Activated CD4-positive, alpha-beta T cell treated with anti-CD3 and anti-CD28 coated beads for 36 hours (primary cell): ENCODE measurements at regions of chr2 and their contacts with region 1.

Region 1: DNA sequence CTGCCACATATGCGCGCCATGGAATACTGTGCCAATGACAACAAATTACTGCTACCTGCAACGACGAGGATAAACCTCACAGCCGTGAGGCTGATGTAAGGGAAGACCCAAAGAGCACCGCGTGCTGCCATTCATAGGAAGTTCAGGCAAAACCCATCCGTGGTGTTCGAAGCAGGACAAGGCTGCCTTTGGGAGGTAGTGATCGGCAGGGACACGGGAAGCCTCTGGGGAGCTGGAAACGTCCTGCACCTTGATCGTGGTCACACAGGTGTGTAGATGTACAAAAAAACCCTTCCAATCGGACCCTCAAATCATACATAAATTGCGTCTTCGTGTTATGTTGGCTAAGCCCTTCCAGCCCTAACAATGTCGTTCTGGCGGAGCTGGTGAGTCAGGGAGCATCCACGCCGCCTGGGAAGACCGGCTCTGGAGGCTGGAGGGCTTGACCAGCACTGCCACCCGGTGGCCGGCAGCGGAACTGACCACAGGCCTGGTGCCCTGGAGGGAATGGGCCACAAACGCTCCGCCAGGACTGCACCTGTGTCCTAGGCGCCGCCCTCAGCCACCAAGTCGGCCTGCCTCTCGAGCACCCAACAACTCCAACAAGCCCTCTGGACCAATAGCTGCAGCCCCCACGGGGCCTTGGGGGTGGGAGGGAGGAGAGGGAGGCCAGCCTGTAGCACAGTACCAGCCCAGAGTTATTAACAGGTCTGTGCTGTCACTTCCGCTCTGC is 4.1 kb upstream of the NEURL3 start:
- DNase-seq: peak; percentile 87
- ATAC-seq: peak; percentile 58
- H3K4me3 Mint-ChIP-seq: no peak overlapping the region
- H3K27ac Mint-ChIP-seq: peak overlapping the region; percentile 39
- H3K4me1 Mint-ChIP-seq: peaks cover 18% of the 10 kb centered on the region
- H3K27me3 Mint-ChIP-seq: peaks cover 12% of the 10 kb centered on the region

Region 2: DNA sequence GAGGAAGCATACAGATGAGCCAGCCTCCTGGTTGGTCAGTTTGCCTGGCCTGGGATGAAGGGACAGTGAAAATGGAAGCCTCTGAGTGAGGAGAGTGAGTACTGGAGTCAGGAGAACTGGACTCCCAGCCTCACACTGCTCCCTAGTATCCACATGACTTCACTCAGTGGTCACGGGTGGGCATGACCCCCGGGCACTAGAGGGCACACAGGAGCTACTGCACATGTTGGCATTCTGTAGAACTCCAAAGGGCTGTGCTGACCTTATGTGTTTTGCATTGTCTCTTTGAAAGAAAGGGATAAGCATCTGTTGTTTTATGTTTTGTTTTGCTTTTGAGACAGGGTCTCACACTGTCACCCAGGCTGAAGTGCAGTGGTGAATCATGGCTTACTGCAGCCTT is 150.0 kb before region 1 on chr2:
- CTCF ChIA-PET with region 1: interaction called, 4 read pairs
- POLR2A ChIA-PET with region 1: no interaction called
- intact Hi-C with region 1: loop called in 1 of 2 experiments (anchors 1 kb)
- DNase-seq: peak; percentile 57
- ATAC-seq: peak; percentile 74
- H3K4me3 Mint-ChIP-seq: no peak overlapping the region
- H3K27ac Mint-ChIP-seq: no peak overlapping the region
- H3K4me1 Mint-ChIP-seq: peaks cover 12% of the 10 kb centered on the region
- H3K27me3 Mint-ChIP-seq: no peaks in the 10 kb centered on the region

Region 3: DNA sequence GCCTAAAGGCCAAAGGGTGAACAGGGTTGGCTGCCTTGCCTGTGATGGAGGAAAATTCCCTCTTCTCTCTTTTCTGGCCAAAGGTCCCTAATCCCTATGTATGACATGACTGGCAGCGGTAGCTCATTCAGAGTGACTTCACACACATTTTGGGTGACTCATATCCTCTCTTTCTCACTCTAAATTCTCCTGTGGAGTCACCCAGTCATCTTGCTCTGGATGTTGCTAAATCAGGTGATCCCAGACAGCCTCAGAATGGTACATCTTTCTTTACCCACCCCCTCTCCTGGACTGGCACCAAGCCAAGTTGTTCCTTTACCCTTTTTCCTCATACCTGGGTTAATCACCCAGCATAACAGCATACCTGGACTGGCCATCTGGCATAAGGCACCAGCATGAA is 81.4 kb before region 1 on chr2:
- CTCF ChIA-PET with region 1: interaction called, 5 read pairs
- POLR2A ChIA-PET with region 1: no interaction called
- intact Hi-C with region 1: loop called in 1 of 2 experiments (anchors 5 kb)
- DNase-seq: peak; percentile 58
- ATAC-seq: peak; percentile 100
- H3K4me3 Mint-ChIP-seq: no peak overlapping the region
- H3K27ac Mint-ChIP-seq: peak overlapping the region; percentile 64
- H3K4me1 Mint-ChIP-seq: peaks cover 10% of the 10 kb centered on the region
- H3K27me3 Mint-ChIP-seq: peaks cover 7% of the 10 kb centered on the region

Region 4: DNA sequence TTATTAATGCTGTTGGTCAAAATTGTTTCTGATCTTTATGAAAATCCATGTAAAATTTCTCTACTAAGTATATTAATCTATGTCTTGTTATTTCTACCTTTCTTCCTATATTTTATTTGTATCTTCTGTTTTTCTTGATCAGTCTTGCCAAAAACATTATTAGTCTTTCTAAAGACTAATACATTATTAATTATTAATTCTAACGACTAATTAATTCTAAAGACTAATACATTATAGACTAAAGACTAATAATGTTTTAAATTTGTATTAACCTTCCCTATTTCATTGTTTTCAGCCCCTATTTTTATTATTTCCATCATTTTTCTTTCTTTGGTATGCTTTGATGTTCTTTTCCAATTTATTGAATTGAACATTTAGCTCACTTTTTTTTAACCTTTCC is 31.8 kb before region 1 on chr2:
- CTCF ChIA-PET with region 1: interaction called, 20 read pairs
- POLR2A ChIA-PET with region 1: no interaction called
- intact Hi-C with region 1: no loop called
- DNase-seq: no peak
- ATAC-seq: no peak
- H3K4me3 Mint-ChIP-seq: no peak overlapping the region
- H3K27ac Mint-ChIP-seq: no peak overlapping the region
- H3K4me1 Mint-ChIP-seq: no peaks in the 10 kb centered on the region
- H3K27me3 Mint-ChIP-seq: peaks cover 9% of the 10 kb centered on the region

Region 5: DNA sequence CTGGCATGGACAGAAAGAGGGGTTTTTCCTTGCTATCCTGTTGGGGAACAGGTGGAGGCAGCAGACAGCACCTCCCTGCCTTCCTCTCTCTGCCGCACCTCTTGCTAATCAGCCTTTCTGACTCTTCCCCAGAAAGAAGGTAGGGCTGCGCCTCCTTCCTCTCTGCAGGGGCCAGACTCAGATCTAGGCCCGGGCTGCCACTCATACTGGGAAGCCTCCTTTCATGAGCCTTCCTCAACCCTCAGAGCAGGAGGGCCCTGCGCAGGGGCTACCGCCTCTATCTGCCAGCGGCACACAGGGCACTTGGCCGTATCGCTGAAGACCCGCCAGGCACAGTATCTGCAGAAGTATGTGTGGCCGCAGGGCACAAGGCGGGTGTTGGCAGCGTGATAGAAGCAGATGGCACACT is 11.3 kb before region 1 on chr2:
- CTCF ChIA-PET with region 1: interaction called, 12 read pairs
- POLR2A ChIA-PET with region 1: no interaction called
- intact Hi-C with region 1: no loop called
- DNase-seq: no peak
- ATAC-seq: no peak
- H3K4me3 Mint-ChIP-seq: no peak overlapping the region
- H3K27ac Mint-ChIP-seq: no peak overlapping the region
- H3K4me1 Mint-ChIP-seq: peaks cover 22% of the 10 kb centered on the region
- H3K27me3 Mint-ChIP-seq: no peaks in the 10 kb centered on the region

Region 6: GRCh38 chr2:96527286-96528005 is 18.2 kb after region 1 on chr2:
- CTCF ChIA-PET with region 1: interaction called, 11 read pairs
- POLR2A ChIA-PET with region 1: interaction called, 6 read pairs
- intact Hi-C with region 1: no loop called
- DNase-seq: peak; percentile 87
- ATAC-seq: no peak
- H3K4me3 Mint-ChIP-seq: peak overlapping the region; percentile 76
- H3K27ac Mint-ChIP-seq: peak overlapping the region; percentile 98
- H3K4me1 Mint-ChIP-seq: peaks cover 88% of the 10 kb centered on the region
- H3K27me3 Mint-ChIP-seq: peaks cover 2% of the 10 kb centered on the region

Region 7: GRCh38 chr2:96730212-96730611 is 220.9 kb after region 1 on chr2:
- CTCF ChIA-PET with region 1: no interaction called
- POLR2A ChIA-PET with region 1: no interaction called
- intact Hi-C with region 1: no loop called
- DNase-seq: no peak
- ATAC-seq: no peak
- H3K4me3 Mint-ChIP-seq: no peak overlapping the region
- H3K27ac Mint-ChIP-seq: no peak overlapping the region
- H3K4me1 Mint-ChIP-seq: peaks cover 3% of the 10 kb centered on the region
- H3K27me3 Mint-ChIP-seq: no peaks in the 10 kb centered on the region